ENCODE measurements at regions of chr16 and their contacts with region 1.

Region 1: DNA sequence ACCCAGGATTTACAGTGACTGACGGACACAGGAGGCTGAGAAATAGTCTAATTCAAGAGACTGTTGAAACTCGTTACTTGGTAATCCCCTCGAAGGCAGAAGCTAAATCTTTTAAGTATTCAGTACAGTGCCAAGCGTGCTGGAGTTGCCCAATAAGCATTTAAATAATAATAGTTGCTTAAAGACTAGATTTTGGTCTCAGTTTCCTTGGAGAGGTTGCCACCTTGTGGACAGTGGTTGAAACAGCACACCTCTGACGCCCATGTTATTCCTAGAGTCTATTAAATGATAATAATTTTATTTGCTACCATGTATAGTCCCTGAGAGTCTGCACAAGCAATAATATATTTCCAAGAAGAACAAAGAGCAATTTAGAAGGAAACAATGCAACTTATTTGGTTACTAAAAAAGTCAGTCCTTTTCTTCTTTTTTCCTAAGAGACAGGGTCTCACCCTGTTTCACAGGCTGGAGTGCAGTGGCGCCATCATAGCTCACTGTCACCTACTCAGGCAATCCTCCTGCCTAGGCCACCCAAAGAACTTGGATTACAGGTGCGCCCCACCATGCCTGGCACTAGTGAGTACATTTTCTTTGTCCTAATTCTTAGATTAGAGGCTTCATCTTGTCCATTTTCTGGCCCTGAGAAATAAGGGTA is 138.0 kb upstream of the NUDT7 start:
- DNase-seq: peak; percentile 21
- H3K4me3 ChIP-seq: no peak overlapping the region
- H3K27ac ChIP-seq: no peak overlapping the region
- H3K27me3 ChIP-seq: peaks cover 2% of the 10 kb centered on the region
- CTCF ChIP-seq: peak; percentile 82

Region 2: DNA sequence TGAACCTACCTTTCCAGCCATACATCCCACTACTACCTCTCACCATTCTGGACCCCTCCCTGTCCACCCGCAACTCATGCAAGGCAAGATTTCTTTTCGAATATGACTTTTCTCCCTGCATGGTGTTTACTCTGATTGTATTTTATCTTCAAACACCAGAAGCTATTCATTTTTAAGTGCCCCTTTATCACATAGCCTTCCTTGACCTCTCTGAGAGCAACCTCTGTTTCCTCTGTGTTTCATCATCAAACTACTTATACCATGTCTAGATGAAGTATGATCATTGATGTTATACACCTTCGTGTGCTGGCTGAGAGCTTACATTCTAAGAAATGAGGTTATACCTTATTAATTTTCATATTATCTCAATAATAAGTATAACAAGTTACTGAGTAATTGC is 353.3 kb before region 1 on chr16:
- CTCF ChIA-PET with region 1: interaction called, 213 read pairs
- POLR2A ChIA-PET with region 1: no interaction called
- DNase-seq: no peak
- H3K4me3 ChIP-seq: no peak overlapping the region
- H3K27ac ChIP-seq: no peak overlapping the region
- H3K27me3 ChIP-seq: peaks cover 9% of the 10 kb centered on the region
- CTCF ChIP-seq: no peak

Region 3: GRCh38 chr16:77236063-77236511 is 348.2 kb before region 1 on chr16:
- CTCF ChIA-PET with region 1: interaction called, 213 read pairs
- POLR2A ChIA-PET with region 1: no interaction called
- DNase-seq: peak; percentile 65
- H3K4me3 ChIP-seq: peak overlapping the region; percentile 17; the same call in 1 of the 2 replicates
- H3K27ac ChIP-seq: no peak overlapping the region
- H3K27me3 ChIP-seq: no peaks in the 10 kb centered on the region
- CTCF ChIP-seq: peak; percentile 100

Region 4: DNA sequence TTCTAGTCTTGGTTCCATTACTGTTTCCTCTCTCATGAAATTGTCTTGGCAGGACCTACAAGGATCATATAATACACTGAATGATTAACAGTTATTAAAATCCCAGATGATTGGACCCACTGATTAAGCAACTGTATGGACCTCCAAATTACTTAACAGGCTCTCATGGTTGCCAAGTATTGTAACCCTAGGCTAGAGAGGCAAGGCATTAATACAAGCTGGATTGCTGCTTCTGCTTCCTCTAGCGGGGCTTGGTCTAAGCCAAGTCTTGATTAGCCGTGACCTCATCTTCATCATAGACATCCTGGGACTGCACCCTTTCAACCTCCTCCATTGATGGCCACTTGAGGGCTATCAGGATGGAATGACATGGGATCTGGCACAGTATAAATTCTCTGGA is 338.2 kb before region 1 on chr16:
- CTCF ChIA-PET with region 1: interaction called, 11 read pairs
- POLR2A ChIA-PET with region 1: no interaction called
- DNase-seq: no peak
- H3K4me3 ChIP-seq: no peak overlapping the region
- H3K27ac ChIP-seq: no peak overlapping the region
- H3K27me3 ChIP-seq: no peaks in the 10 kb centered on the region
- CTCF ChIP-seq: no peak

Region 5: DNA sequence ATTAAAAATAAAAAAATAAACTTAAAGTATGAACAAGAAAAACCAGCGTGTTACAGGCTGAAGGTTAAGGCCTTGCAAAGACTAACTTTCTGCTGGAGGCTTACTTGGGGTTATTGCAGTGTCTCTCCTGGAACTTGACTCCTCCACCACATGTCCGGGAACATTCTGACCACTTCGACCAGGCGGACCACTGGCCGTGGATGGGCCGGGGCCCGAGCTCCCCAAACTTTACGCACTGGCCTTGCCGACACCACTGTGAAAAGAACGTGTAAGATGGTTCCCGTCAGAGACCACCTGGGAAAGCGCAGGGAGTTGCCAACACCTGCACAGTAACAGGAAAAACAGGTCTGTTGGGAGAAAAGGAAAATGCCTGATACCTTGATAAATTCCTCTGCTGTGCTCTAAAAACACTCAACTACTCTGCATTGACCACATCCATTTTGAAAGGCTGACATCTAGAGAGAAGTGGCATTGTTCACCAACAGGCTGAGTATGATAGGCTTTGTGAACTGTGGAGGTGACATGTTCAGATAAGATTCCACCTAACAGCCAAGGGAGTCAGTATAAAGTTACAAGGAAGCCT is 248.6 kb before region 1 on chr16:
- CTCF ChIA-PET with region 1: no interaction called
- POLR2A ChIA-PET with region 1: no interaction called
- DNase-seq: no peak
- H3K4me3 ChIP-seq: no peak overlapping the region
- H3K27ac ChIP-seq: no peak overlapping the region
- H3K27me3 ChIP-seq: no peaks in the 10 kb centered on the region
- CTCF ChIP-seq: no peak

Region 6: GRCh38 chr16:77570574-77570973 is 13.8 kb before region 1 on chr16:
- CTCF ChIA-PET with region 1: interaction called, 18 read pairs
- POLR2A ChIA-PET with region 1: no interaction called
- DNase-seq: no peak
- H3K4me3 ChIP-seq: no peak overlapping the region
- H3K27ac ChIP-seq: no peak overlapping the region
- H3K27me3 ChIP-seq: no peaks in the 10 kb centered on the region
- CTCF ChIP-seq: no peak

Region 7: GRCh38 chr16:77599793-77600415 is 15.6 kb after region 1 on chr16:
- CTCF ChIA-PET with region 1: interaction called, 13 read pairs
- POLR2A ChIA-PET with region 1: no interaction called
- DNase-seq: no peak
- H3K4me3 ChIP-seq: no peak overlapping the region
- H3K27ac ChIP-seq: no peak overlapping the region
- H3K27me3 ChIP-seq: no peaks in the 10 kb centered on the region
- CTCF ChIP-seq: peak; percentile 71

Region 8: DNA sequence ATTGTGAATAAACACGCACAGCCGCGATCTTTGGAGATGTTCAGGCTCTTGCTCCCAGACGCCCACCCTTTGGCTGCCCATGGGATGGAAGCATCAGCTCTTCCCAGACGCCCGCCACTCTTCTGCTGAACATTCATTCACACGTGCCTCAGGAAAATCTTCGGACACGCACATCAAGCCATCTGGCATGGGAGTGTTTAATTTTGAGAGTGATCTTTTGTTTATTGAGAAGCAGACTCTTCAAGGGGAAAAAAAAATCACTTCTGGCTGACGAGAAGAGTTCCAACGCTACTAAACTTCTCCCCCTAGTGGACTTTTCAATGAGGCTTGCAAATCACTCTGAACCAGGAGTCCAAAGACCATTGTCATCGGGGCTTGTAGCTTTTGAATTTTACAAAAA is 76.0 kb after region 1 on chr16:
- CTCF ChIA-PET with region 1: interaction called, 12 read pairs
- POLR2A ChIA-PET with region 1: no interaction called
- DNase-seq: peak; percentile 11
- H3K4me3 ChIP-seq: no peak overlapping the region
- H3K27ac ChIP-seq: no peak overlapping the region
- H3K27me3 ChIP-seq: no peaks in the 10 kb centered on the region
- CTCF ChIP-seq: peak; percentile 78

Measured in AG04450 (cell line).